HCT116 (cell line): ENCODE measurements at regions of chr14 and their contacts with region 1.

Region 1: GRCh38 chr14:34098045-34098984 is 147.4 kb upstream of the EGLN3 start:
- DNase-seq: peak; percentile 46
- ATAC-seq: peak; percentile 73
- H3K4me3 ChIP-seq: no peak overlapping the region
- H3K27ac ChIP-seq: no peak overlapping the region
- H3K4me1 ChIP-seq: no peaks in the 10 kb centered on the region
- H3K27me3 ChIP-seq: no peaks in the 10 kb centered on the region
- CTCF ChIP-seq: peak; percentile 61 to 91 (median 83)
- POLR2A ChIP-seq: no peak
- RAD21 ChIP-seq: peak; percentile 94

Region 2: DNA sequence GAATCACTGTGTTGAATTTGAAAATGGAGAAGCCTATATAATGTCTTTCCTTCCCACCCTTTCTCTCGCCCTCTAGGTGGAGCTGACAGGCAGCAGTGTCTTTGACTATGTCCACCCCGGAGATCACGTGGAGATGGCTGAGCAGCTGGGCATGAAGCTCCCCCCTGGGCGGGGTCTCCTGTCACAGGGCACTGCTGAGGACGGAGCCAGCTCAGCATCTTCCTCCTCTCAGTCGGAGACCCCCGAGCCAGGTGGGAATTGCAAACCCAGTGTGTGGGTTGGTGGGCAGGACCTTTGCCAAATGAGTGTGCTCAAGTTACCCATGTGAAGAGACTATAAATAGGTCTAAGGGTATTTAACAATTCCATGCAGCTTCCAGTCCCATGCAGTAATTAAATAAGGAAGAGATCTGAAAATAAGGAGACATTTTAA is 422.2 kb before region 1 on chr14:
- CTCF ChIA-PET with region 1: interaction called, 3 read pairs
- POLR2A ChIA-PET with region 1: no interaction called
- RAD21 ChIA-PET with region 1: no interaction called
- intact Hi-C with region 1: loop called (anchors 10 kb)
- DNase-seq: peak; percentile 16
- ATAC-seq: peak; percentile 97
- H3K4me3 ChIP-seq: no peak overlapping the region
- H3K27ac ChIP-seq: no peak overlapping the region
- H3K4me1 ChIP-seq: no peaks in the 10 kb centered on the region
- H3K27me3 ChIP-seq: no peaks in the 10 kb centered on the region; the same call in 1 of the 2 replicates
- CTCF ChIP-seq: peak; percentile 18 to 54 (median 54); a peak in 4 of 6 replicates
- POLR2A ChIP-seq: no peak
- RAD21 ChIP-seq: peak; percentile 42; the same call in 1 of the 2 replicates

Region 3: DNA sequence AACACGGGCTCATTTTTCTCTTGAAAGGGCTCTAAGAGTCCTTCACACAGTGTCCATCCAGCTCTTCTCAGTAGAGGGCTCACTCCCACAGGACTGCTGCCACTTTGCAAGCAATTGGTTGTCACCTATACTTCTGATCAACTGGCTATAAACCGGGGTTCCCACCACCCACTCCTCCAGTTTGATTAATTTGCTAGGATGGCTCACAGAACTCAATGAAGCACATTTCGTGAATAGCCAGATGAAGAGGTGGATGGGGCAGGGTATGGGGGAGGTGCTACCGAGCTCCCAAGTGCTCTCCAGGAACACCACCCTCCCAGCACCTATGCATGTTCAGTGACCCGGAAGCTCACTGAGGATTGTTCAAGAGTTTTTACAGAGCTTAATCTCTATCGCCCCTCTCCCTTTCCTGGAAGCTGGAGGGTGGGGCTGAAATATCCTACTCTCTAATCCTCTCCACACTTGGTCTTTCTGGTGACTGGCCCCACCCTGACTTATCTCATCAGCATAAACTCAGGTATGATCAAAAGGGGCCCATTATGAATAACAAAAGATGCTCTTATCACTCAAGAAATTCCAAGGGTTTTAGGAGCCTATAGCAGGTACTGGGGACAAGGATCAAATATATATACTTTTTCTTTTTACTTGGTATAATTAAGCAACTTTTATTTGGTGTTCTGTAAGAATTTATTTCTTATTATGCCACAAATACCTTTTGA is 133.6 kb before region 1 on chr14:
- CTCF ChIA-PET with region 1: interaction called, 10 read pairs
- POLR2A ChIA-PET with region 1: no interaction called
- RAD21 ChIA-PET with region 1: interaction called in 1 of 2 experiments, 4 read pairs
- intact Hi-C with region 1: no loop called
- DNase-seq: no peak
- ATAC-seq: no peak; the same call in 1 of the 2 replicates
- H3K4me3 ChIP-seq: no peak overlapping the region
- H3K27ac ChIP-seq: no peak overlapping the region
- H3K4me1 ChIP-seq: no peaks in the 10 kb centered on the region
- H3K27me3 ChIP-seq: no peaks in the 10 kb centered on the region
- CTCF ChIP-seq: 0 out of 6 replicates have a peak, but pooled peaks of 1 of the 3 experiments have one; percentile 7
- POLR2A ChIP-seq: no peak
- RAD21 ChIP-seq: peak; percentile 42; the same call in 1 of the 2 replicates

Region 4: GRCh38 chr14:34075042-34075744 is 23.1 kb before region 1 on chr14:
- CTCF ChIA-PET with region 1: no interaction called
- POLR2A ChIA-PET with region 1: no interaction called
- RAD21 ChIA-PET with region 1: no interaction called
- intact Hi-C with region 1: no loop called
- DNase-seq: no peak
- ATAC-seq: no peak
- H3K4me3 ChIP-seq: no peak overlapping the region
- H3K27ac ChIP-seq: no peak overlapping the region
- H3K4me1 ChIP-seq: peaks cover 6 to 9% of the 10 kb centered on the region in 2 experiments; a peak in 3 of 4 replicates
- H3K27me3 ChIP-seq: no peaks in the 10 kb centered on the region
- CTCF ChIP-seq: no peak
- POLR2A ChIP-seq: no peak
- RAD21 ChIP-seq: no peak

Region 5: DNA sequence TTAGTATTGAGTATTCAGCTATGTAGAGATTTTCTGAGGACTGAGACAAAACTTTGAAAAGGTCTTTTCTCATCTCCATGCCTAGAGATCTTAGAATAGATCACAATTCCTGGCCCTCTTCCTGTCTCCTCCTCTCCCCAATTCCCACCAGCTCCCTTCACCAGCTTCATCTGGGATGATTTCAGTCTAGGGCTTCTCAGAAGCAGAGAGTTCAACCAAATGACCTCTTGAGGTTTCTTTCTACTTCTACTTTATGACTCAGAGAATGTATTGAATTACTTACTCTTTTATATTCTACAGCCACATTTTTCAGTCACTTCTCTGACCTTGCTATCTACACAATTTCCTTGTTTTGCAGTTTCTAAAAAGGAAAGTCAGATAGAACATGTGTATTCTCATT is 551.0 kb after region 1 on chr14:
- CTCF ChIA-PET with region 1: no interaction called
- POLR2A ChIA-PET with region 1: no interaction called
- RAD21 ChIA-PET with region 1: no interaction called
- intact Hi-C with region 1: no loop called
- DNase-seq: no peak
- ATAC-seq: peak; percentile 63
- H3K4me3 ChIP-seq: 0 out of 4 replicates have a peak overlapping the region, but pooled peaks of 1 of the 2 experiments have one; percentile 0
- H3K27ac ChIP-seq: no peak overlapping the region
- H3K4me1 ChIP-seq: peaks cover 22 to 29% of the 10 kb centered on the region in 2 experiments
- H3K27me3 ChIP-seq: no peaks in the 10 kb centered on the region
- CTCF ChIP-seq: no peak
- POLR2A ChIP-seq: no peak
- RAD21 ChIP-seq: no peak